ENCODE measurements at regions of chr4 and their contacts with region 1.

Region 1: DNA sequence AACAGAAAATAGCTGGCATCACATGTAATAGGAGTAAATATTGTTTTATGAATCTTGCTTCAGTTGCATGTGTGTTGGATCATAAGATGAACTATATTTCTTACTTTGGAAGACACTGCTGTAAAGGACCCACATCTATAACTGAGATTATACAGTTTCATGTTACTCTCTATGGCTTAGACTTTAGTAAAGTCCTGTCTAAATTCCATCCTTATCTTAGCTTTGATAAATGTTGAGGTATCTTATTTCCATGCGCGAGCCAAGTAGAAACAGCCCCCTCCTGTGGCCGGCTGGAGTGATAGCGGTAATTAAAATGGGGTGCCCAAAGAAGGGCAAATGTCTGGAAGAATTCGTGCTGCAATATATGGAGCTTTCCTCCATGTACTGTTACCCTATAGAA is 43.0 kb downstream of the CCDC158 start:
- DNase-seq: peak; percentile 23
- CTCF ChIP-seq: peak; percentile 58

Region 2: DNA sequence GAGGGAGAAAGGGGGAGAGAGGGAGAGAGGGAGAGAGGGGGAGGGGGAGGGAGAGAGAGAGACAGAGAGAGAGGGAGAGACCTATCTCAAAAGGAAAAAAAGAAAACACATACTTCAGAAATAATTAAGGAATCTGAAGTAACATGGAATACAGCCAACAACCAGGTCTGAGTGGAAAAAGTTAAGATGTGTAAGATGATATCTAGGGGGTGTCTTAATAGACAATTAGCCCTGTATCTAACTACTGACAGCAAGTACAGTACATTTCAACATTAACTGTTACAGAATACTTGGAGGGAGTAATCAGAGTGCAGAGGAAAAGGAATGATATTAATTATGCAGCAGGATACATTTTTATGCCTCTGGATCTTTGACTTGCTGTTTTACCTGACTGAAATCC is 252.1 kb before region 1 on chr4:
- CTCF ChIA-PET with region 1: no interaction called
- POLR2A ChIA-PET with region 1: no interaction called
- DNase-seq: no peak
- CTCF ChIP-seq: no peak

Region 3: DNA sequence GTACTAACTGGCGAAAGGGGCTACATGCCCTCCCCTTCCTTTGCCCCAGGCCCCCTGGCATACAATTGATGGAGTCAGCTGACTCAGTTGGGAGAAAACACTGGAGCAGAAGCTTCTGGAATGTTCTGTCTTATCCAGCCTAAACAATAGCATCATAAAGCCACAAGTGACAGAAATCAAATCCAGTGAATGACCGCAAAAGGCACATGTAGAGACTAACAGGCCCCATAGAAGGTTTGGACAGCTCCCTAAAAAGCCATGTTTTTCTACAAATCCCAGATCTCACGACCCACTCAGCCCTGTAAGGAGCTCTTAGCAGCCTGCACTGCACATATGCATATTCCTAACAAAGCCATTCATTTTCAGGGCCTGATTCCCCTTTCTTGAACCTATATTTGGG is 189.4 kb before region 1 on chr4:
- CTCF ChIA-PET with region 1: interaction called, 14 read pairs
- POLR2A ChIA-PET with region 1: no interaction called
- DNase-seq: no peak
- CTCF ChIP-seq: no peak

Region 4: GRCh38 chr4:76354517-76355473 is 23.1 kb before region 1 on chr4:
- CTCF ChIA-PET with region 1: interaction called, 11 read pairs
- POLR2A ChIA-PET with region 1: no interaction called
- DNase-seq: no peak
- CTCF ChIP-seq: no peak

Region 5: GRCh38 chr4:76388160-76388908 is 10.4 kb after region 1 on chr4:
- CTCF ChIA-PET with region 1: interaction called, 19 read pairs
- POLR2A ChIA-PET with region 1: no interaction called
- DNase-seq: no peak
- CTCF ChIP-seq: no peak

Measured in GM10248 (cell line).